ENCODE measurements at regions of chr14 and their contacts with region 1.

Region 1: DNA sequence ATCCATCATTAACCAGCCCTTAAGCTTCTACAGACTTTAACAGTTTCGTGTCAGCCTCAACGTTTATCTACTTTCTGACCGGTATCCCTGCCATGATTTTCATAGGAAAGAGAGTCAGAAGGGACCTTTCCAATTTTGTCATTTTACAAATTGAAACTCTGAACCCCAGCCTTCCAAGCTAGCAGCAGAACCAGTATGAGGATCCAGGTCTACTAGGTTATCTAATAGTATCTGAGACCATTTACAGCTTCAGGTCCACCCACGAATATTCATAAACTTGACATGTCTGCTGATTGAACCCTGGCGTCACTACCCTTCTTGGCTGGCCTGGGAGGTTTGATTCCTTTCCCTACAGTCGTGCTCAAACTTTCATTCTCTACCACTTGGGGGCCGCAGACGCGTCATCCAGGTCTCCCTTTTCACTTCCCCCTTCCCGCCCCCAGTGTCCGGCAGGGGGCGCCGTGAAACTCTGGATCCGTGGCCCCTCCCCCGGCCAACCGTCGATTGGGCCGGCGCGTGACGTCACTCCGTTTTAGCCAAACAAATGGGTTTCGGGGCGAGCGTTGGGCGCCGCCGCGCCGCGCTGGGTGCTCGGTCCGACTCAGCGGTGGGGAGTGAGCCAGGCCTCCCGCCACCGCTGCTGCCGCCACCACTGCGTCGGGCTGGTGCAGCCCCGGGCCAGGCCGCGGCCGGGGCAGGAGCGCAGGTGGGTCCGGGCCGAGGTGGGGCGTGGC is at the start of gene FBXO34:
- DNase-seq: peak; percentile 99
- H3K4me3 Mint-ChIP-seq: peak within 1 kb of the TSS; percentile 82
- H3K27ac Mint-ChIP-seq: peak within 1 kb of the TSS; percentile 92
- H3K4me1 Mint-ChIP-seq: peaks cover 26% of the 10 kb centered on the region
- H3K27me3 Mint-ChIP-seq: no peaks in the 10 kb centered on the region
- CTCF ChIP-seq: peak; percentile 98
- total RNA-seq, gene FBXO34: 12.0 and 13.7 TPM in 2 replicates

Region 2: DNA sequence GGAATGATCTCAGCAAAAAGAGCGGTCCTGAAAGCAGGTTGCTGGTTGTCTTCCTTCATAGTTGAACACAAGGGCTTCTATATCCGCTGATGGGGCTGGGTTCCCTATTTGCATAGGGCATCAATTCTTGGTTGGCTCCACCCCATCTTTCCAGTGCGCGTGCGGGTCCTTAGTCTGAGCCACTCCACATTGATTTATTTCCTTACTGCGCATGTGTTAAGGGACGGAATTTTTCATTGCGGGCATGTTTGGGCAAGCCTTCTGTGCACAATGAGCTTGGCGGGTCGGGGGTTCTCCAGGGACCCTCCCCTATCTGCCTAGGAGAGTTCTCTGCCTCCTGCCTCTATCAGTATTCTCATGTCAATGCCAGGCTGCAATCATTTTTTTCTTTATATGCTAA is 58.4 kb before region 1 on chr14:
- CTCF ChIA-PET with region 1: interaction called, 22 read pairs
- POLR2A ChIA-PET with region 1: interaction called, 37 read pairs
- intact Hi-C with region 1: loop called (anchors 5 kb)
- DNase-seq: peak; percentile 82
- H3K4me3 Mint-ChIP-seq: peak overlapping the region; percentile 16
- H3K27ac Mint-ChIP-seq: peak overlapping the region; percentile 87
- H3K4me1 Mint-ChIP-seq: peaks cover 14% of the 10 kb centered on the region
- H3K27me3 Mint-ChIP-seq: no peaks in the 10 kb centered on the region
- CTCF ChIP-seq: no peak

Region 3: GRCh38 chr14:55288439-55288838 is 17.4 kb after region 1 on chr14:
- CTCF ChIA-PET with region 1: interaction called, 10 read pairs
- POLR2A ChIA-PET with region 1: interaction called, 5 read pairs
- intact Hi-C with region 1: no loop called
- DNase-seq: no peak
- H3K4me3 Mint-ChIP-seq: no peak overlapping the region
- H3K27ac Mint-ChIP-seq: no peak overlapping the region
- H3K4me1 Mint-ChIP-seq: no peaks in the 10 kb centered on the region
- H3K27me3 Mint-ChIP-seq: no peaks in the 10 kb centered on the region
- CTCF ChIP-seq: no peak

Region 4: DNA sequence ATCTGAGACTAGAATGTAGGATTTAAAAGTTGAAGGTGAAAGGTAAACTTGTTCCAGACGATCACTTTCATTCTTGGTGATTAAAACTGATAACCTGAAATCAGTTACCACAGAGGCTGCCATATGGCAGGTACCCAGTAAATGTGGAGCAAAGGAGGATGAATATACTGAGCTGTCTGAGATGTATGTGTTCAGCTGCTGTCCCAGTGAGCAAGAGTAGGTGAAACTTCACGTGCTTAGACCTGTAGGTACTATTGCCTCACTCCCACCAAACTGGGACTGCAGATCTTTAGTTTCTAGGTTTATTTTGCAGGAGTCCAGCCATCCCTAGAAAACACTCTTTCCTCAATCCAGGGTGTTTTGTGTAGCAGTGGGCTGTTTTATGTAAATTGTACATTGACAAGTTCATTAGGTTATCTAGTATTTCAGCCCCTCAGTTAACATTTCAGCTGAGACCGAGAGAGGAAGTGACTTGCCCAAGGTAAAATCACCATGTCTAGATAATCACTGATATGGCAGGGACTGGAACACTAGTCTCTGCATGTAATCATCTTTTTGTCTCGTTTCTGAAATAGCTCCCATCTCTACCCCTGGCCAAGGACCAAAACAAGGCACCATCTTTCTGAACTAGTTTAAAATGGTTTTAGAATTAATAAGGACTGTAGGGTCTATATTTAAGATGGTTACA is 77.9 kb after region 1 on chr14:
- CTCF ChIA-PET with region 1: interaction called, 36 read pairs
- POLR2A ChIA-PET with region 1: interaction called, 9 read pairs
- intact Hi-C with region 1: loop called (anchors 1 kb)
- DNase-seq: no peak
- H3K4me3 Mint-ChIP-seq: no peak overlapping the region
- H3K27ac Mint-ChIP-seq: no peak overlapping the region
- H3K4me1 Mint-ChIP-seq: no peaks in the 10 kb centered on the region
- H3K27me3 Mint-ChIP-seq: no peaks in the 10 kb centered on the region
- CTCF ChIP-seq: no peak

Region 5: GRCh38 chr14:55411426-55412389 is 140.7 kb after region 1 on chr14 and contains the start of gene ATG14:
- CTCF ChIA-PET with region 1: interaction called, 5 read pairs
- POLR2A ChIA-PET with region 1: interaction called, 9 read pairs
- intact Hi-C with region 1: loop called (anchors 5 kb)
- DNase-seq: peak; percentile 83
- H3K4me3 Mint-ChIP-seq: peak within 1 kb of the TSS; percentile 85
- H3K27ac Mint-ChIP-seq: peak within 1 kb of the TSS; percentile 96
- H3K4me1 Mint-ChIP-seq: peaks cover 23% of the 10 kb centered on the region
- H3K27me3 Mint-ChIP-seq: peaks cover 20% of the 10 kb centered on the region
- CTCF ChIP-seq: no peak
- total RNA-seq, gene ATG14: 6.5 and 6.6 TPM in 2 replicates

Region 6: DNA sequence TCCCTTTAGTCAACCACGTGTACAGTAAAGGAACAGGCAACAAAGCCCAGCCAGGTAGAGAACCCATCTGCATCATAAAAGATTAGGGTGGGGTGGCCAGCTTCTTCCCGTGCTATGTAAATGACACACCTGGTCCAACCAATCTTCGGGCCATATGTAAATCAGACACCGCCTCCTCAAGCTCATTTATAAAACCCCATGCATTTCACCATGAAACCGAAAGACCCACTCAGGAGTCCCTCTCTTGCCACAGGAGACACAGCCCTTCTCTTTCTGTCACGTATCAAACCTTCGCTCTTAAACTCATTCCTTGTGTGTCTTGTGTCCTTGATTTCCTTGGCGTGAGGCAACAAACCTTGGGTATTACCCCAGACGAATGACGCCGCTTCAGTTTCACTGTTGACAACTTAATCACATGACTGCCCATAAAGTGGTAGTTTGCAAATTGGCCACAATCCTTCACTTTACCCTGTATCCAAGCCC is 229.3 kb after region 1 on chr14:
- CTCF ChIA-PET with region 1: no interaction called
- POLR2A ChIA-PET with region 1: no interaction called
- intact Hi-C with region 1: no loop called
- DNase-seq: no peak
- H3K4me3 Mint-ChIP-seq: no peak overlapping the region
- H3K27ac Mint-ChIP-seq: no peak overlapping the region
- H3K4me1 Mint-ChIP-seq: no peaks in the 10 kb centered on the region
- H3K27me3 Mint-ChIP-seq: peaks cover 15% of the 10 kb centered on the region
- CTCF ChIP-seq: no peak